Lower leg skin (tissue), 4 donors: ENCODE measurements at regions of chr1 and their contacts with region 1.

Region 1: GRCh38 chr1:211476200-211476849 is 15.6 kb downstream of the RD3 start:
- DNase-seq: peak; percentile 73 to 89
- H3K4me3 ChIP-seq: no peak overlapping the region
- CTCF ChIP-seq: no peak
- POLR2A ChIP-seq: no peak

Region 2: DNA sequence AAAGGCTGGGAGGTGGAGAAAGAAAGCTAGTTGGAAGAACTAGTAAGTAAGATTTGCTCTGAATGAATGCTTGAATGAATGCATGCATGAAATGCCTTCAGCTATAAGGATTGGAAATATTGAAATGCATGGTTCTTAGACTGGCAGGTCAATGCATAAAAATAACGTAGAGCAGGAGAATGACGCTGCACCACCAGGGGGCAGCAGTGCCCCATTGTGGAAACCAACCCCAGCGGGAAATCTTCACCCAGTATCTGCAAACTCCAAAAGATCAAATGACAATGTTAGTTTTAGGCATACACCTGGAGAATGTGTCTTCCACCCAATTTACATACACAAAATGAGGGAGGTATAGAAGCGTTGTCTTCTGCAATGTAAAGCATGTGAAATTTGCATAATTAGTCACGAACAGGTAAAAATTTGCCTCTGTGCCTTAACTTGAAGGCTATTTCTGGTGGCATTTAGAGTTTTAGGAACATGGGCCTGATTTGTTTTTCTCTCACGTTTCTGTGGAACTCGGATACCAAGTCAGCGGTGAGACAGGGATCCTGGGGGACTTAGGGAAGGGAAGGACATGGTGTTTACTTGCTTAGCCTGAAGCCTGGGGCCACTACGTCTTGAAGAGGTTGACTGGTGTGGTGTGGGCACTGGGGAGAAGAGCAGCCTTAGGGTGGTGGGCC is 1069.0 kb before region 1 on chr1:
- intact Hi-C with region 1: no loop called
- DNase-seq: peak; percentile 42 to 92
- H3K4me3 ChIP-seq: no peak overlapping the region
- CTCF ChIP-seq: peak in 1 of 3 donors; percentile 43
- POLR2A ChIP-seq: no peak

Region 3: DNA sequence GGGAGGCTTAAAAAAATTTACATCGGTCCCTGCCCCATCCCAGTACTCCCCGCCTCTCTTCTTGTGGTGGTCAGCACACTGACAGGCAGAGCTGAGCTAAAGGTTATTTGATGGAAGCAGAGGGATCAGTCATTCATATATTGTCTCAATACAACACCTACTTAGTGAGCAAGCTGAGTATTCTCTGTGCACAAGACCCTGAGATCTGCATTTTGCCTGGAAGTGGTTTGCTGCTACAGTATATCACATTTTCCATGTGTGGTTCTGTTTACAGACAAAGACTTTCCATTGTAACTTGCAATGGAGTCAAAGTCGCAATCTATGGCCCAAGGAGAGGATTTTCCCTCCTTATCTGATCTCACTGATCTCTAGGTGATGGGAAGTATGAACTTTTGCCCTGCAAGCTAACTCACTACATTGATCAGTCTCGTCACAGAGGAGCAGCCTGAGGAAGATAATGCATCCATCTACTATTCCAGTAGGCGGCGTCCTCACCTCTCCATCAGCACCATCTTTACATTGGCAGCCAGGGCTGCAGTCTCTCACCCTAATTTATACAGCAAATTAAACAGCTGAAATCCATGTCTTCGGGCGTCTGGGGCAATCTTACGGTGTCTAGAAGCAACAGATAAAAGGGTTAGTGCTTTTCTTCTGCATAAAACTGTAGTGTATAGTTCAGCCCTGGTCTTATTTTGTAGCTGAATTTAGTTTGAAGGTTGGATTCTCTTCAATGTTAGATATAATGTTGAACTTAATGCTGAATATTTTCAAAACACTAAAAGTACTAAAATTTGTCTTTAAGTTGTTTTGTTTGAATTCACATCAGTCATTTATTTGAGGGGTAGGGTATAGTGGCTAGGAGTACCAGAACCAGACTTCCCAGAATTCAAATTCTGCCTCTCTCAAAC is 152.9 kb before region 1 on chr1:
- intact Hi-C with region 1: loop called (anchors 10 kb)
- DNase-seq: peak; percentile 49 to 88
- H3K4me3 ChIP-seq: no peak overlapping the region
- CTCF ChIP-seq: peak in 1 of 3 donors; percentile 60
- POLR2A ChIP-seq: no peak

Region 4: DNA sequence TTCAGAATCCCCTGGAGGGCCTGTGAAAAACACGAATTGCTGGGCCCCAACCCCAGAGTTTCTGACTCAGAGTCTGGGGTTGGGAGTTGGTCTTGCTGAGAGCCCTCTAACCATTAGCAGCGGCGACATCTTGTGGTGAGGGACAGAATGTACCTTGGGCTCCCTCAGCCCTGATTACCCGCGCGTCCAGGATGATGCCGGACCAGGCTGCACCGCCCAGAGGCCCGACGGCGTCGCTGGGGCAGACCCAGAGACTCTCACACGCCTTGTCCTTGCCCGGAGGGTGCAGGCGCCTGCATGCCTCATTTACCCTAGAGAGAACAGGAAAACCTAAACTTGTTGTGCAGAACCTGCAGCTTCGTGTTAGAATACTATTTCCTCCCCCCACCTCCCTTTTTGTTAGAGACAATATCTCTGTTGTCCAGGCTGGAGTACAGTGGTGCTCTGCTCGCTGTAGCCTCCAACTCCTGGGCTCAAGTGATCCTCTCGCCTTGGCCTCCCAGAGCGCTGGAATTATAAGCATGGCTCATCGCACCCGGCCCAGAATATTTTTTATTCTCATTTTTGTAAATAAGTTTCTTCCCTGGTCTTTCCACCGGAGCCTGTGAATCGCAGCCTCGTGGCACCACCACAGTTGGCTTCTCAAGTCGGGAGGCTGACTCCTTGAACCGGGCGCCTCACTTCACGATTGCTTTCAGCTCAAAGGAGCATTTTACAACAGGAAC is 37.9 kb after region 1 on chr1:
- intact Hi-C with region 1: no loop called
- DNase-seq: peak; percentile 76 to 94
- H3K4me3 ChIP-seq: no peak overlapping the region
- CTCF ChIP-seq: peak in 1 of 3 donors; percentile 43
- POLR2A ChIP-seq: no peak

Region 5: GRCh38 chr1:211566431-211567025 is 90.2 kb after region 1 on chr1:
- intact Hi-C with region 1: no loop called
- DNase-seq: peak in 1 of 2 donors; percentile 28
- H3K4me3 ChIP-seq: no peak overlapping the region
- CTCF ChIP-seq: no peak
- POLR2A ChIP-seq: no peak